ENCODE measurements at regions of chr7 and their contacts with region 1.

Region 1: DNA sequence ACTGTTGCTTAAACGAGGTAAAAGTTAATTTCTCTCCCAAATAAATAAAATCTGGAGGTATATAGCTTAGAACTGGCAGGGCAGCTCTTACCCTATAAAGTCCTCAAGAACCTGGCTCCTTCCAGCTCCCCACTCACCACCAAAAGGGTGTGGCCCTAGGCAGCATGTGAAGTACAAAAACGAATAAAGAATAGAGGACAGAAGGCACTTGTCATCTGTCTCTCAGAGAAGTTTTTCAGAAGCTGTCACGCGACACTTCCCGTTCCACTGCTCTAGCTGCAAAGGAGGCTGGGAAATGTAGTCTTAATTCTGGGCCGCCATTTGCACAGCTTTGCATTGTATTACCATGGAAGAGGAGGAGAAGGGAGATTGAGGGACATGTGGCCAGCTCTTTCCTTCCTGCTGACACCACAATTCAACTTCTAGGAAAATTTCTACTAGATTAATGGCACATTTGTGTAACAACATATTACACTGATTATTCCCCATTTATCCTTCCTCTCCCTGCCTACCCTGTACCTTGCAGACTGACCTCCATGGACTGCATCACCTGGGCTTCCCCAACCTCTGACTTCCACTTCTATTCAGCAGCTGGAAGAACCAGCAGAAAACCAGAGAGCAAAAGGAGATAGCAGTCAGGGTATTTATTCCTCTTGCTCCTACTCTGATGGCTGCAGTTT is 62.2 kb downstream of the CCDC71L start:
- DNase-seq: peak; percentile 85
- H3K4me3 Mint-ChIP-seq: peak overlapping the region; percentile 44
- H3K27ac Mint-ChIP-seq: no peak overlapping the region
- H3K4me1 Mint-ChIP-seq: peaks cover 4% of the 10 kb centered on the region
- H3K27me3 Mint-ChIP-seq: no peaks in the 10 kb centered on the region

Region 2: GRCh38 chr7:106561666-106562411 is 37.0 kb before region 1 on chr7:
- CTCF ChIA-PET with region 1: no interaction called
- intact Hi-C with region 1: loop called (anchors 2 kb)
- DNase-seq: peak; percentile 21
- H3K4me3 Mint-ChIP-seq: no peak overlapping the region
- H3K27ac Mint-ChIP-seq: no peak overlapping the region
- H3K4me1 Mint-ChIP-seq: peaks cover 7% of the 10 kb centered on the region
- H3K27me3 Mint-ChIP-seq: peaks cover 4% of the 10 kb centered on the region

Measured in activated naive CD4-positive, alpha-beta T cell treated with anti-CD3 and anti-CD28 coated beads for 36 hours (primary cell).